ENCODE measurements at regions of chr12 and their contacts with region 1.

Region 1: GRCh38 chr12:96399919-96400797 is at the start of gene CDK17:
- DNase-seq: no peak
- ATAC-seq: peak; percentile 59
- H3K4me3 ChIP-seq: peak within 1 kb of the TSS; percentile 92
- H3K27ac ChIP-seq: peak within 1 kb of the TSS; percentile 96
- H3K4me1 ChIP-seq: peaks cover 24% of the 10 kb centered on the region; the same call in 1 of the 2 replicates
- H3K27me3 ChIP-seq: no peaks in the 10 kb centered on the region
- CTCF ChIP-seq: peak in 2 of 3 experiments; percentile 36 to 58; a peak in 3 of 6 replicates
- EP300 ChIP-seq: no peak
- POLR2A ChIP-seq: peak; percentile 67
- RAD21 ChIP-seq: peak; percentile 58
- polyA plus RNA-seq, gene CDK17: 5.6 to 6.1 TPM

Region 2: GRCh38 chr12:96194971-96195844 is 204.9 kb before region 1 on chr12:
- CTCF ChIA-PET with region 1: interaction called, 3 read pairs
- POLR2A ChIA-PET with region 1: no interaction called
- RAD21 ChIA-PET with region 1: interaction called, 10 read pairs
- SMC1A ChIA-PET with region 1: no interaction called
- in situ Hi-C with region 1: no loop called
- intact Hi-C with region 1: loop called (anchors 5 kb)
- DNase-seq: peak; percentile 80
- ATAC-seq: peak; percentile 80
- H3K4me3 ChIP-seq: peak overlapping the region; percentile 98
- H3K27ac ChIP-seq: peak overlapping the region; percentile 72
- H3K4me1 ChIP-seq: peaks cover 28% of the 10 kb centered on the region
- H3K27me3 ChIP-seq: peaks cover under 1 to 2% of the 10 kb centered on the region in 2 experiments; a peak in 3 of 4 replicates
- CTCF ChIP-seq: no peak
- EP300 ChIP-seq: peak; percentile 75 to 79; a peak in 3 of 4 replicates
- POLR2A ChIP-seq: peak; percentile 33; the same call in 1 of the 2 replicates
- RAD21 ChIP-seq: 0 out of 2 replicates have a peak, but pooled peaks have one; percentile 2

Region 3: DNA sequence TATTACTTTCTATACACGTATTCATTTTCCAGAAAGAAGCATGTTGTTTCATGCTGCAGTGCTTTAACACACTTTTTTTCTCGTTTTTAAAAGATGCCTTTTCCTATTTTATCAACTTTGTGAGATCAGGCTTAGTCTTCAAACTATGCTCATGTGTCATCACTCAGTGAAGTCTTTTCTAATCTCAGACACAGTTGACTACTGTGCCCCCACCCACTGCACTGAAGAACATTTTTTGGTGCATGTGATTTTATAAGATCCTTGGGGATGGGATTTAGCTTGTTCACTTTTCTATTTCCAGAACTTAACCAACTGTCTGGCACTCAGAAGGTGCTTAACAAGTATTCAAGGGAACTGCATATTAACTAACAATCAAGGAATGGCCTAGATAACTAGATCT is 85.4 kb before region 1 on chr12:
- CTCF ChIA-PET with region 1: interaction called, 5 read pairs
- POLR2A ChIA-PET with region 1: interaction called, 3 read pairs
- RAD21 ChIA-PET with region 1: interaction called, 21 read pairs
- SMC1A ChIA-PET with region 1: interaction called, 27 read pairs
- in situ Hi-C with region 1: no loop called
- intact Hi-C with region 1: no loop called
- DNase-seq: no peak
- ATAC-seq: peak; percentile 24; the same call in 1 of the 3 replicates
- H3K4me3 ChIP-seq: no peak overlapping the region
- H3K27ac ChIP-seq: peak overlapping the region; percentile 18; the same call in 1 of the 2 replicates
- H3K4me1 ChIP-seq: peaks cover 18% of the 10 kb centered on the region
- H3K27me3 ChIP-seq: no peaks in the 10 kb centered on the region
- CTCF ChIP-seq: no peak
- EP300 ChIP-seq: no peak
- POLR2A ChIP-seq: no peak
- RAD21 ChIP-seq: no peak

Region 4: DNA sequence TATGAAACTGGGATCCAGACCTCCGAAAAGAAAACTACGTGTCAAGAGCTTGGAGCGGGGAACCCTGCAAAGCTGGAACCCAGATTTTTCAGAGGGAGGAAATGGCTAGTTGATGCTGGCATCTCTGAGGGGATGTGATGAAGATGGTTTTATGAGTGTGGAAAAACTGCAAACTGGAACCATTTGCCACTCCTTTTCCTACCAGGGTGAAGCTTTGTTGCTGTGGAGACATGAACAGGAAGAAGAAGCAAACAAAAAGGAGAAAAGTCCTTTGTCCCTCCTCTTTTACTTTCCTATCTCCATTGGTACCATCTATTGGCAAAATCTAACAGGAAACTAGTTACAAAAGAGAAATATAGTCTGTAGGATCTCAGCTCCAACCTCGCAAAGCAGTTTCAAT is 39.1 kb before region 1 on chr12:
- CTCF ChIA-PET with region 1: no interaction called
- POLR2A ChIA-PET with region 1: interaction called, 3 read pairs
- RAD21 ChIA-PET with region 1: interaction called, 5 read pairs
- SMC1A ChIA-PET with region 1: interaction called, 6 read pairs
- in situ Hi-C with region 1: no loop called
- intact Hi-C with region 1: loop called (anchors 5 kb)
- DNase-seq: no peak
- ATAC-seq: no peak
- H3K4me3 ChIP-seq: no peak overlapping the region
- H3K27ac ChIP-seq: no peak overlapping the region
- H3K4me1 ChIP-seq: no peaks in the 10 kb centered on the region; the same call in 1 of the 2 replicates
- H3K27me3 ChIP-seq: no peaks in the 10 kb centered on the region
- CTCF ChIP-seq: no peak
- EP300 ChIP-seq: no peak
- POLR2A ChIP-seq: no peak
- RAD21 ChIP-seq: no peak

Region 5: GRCh38 chr12:96416033-96416801 is 16.1 kb after region 1 on chr12:
- CTCF ChIA-PET with region 1: interaction called, 5 read pairs
- POLR2A ChIA-PET with region 1: no interaction called
- RAD21 ChIA-PET with region 1: interaction called, 7 read pairs
- SMC1A ChIA-PET with region 1: interaction called, 19 read pairs
- in situ Hi-C with region 1: no loop called
- intact Hi-C with region 1: no loop called
- DNase-seq: no peak
- ATAC-seq: no peak
- H3K4me3 ChIP-seq: no peak overlapping the region
- H3K27ac ChIP-seq: no peak overlapping the region
- H3K4me1 ChIP-seq: peaks cover 22% of the 10 kb centered on the region
- H3K27me3 ChIP-seq: no peaks in the 10 kb centered on the region
- CTCF ChIP-seq: no peak
- EP300 ChIP-seq: no peak
- POLR2A ChIP-seq: no peak
- RAD21 ChIP-seq: no peak

Measured in GM12878 (cell line).